ENCODE measurements at regions of chr17 and their contacts with region 1.

Region 1: GRCh38 chr17:82320956-82321927 is 3.8 kb upstream of the CD7 start:
- DNase-seq: peak in 2 of 5 donors; percentile 57 to 58
- H3K4me3 ChIP-seq: no peak overlapping the region
- H3K27ac ChIP-seq: no peak overlapping the region
- H3K4me1 ChIP-seq: peaks cover 2% of the 10 kb centered on the region
- H3K27me3 ChIP-seq: no peaks in the 10 kb centered on the region
- CTCF ChIP-seq: peak; percentile 72 to 93 (median 93)
- EP300 ChIP-seq: no peak
- POLR2A ChIP-seq: no peak

Region 2: GRCh38 chr17:81871387-81872230 is 449.6 kb before region 1 on chr17:
- intact Hi-C with region 1: no loop called
- DNase-seq: peak; percentile 93 to 96 (median 95)
- H3K4me3 ChIP-seq: peak overlapping the region; percentile 90
- H3K27ac ChIP-seq: peak overlapping the region; percentile 87 to 95
- H3K4me1 ChIP-seq: peaks cover 12% of the 10 kb centered on the region
- H3K27me3 ChIP-seq: no peaks in the 10 kb centered on the region
- CTCF ChIP-seq: peak in 2 of 3 donors; percentile 33 to 56
- EP300 ChIP-seq: peak; percentile 21
- POLR2A ChIP-seq: peak; percentile 98

Region 3: DNA sequence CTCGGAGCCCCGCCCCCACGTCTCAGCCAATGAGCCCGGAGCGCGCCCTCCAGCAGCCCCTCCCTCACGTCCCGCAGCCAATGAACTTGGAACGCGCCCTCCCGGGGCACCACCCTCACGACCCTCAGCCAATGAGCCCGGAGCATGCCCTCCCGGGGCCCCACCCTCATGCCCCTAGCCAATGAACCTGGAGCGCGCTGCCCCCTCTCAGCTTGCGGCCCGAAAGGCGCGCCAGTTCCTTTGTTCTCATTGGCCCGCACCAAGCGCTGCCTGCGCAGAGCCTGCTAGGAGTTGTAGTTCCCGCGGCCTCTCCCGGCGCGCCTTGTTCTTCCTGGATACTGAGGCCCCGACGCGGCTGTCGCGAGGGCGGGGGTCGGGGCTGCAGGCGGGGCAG is 298.3 kb before region 1 on chr17 and contains the start of gene LRRC45:
- intact Hi-C with region 1: loop called in 1 of 4 experiments (anchors 10 kb)
- DNase-seq: peak; percentile 99 to 100 (median 100)
- H3K4me3 ChIP-seq: peak within 1 kb of the TSS; percentile 95
- H3K27ac ChIP-seq: peak within 1 kb of the TSS; percentile 20 to 44
- H3K4me1 ChIP-seq: peaks cover 8% of the 10 kb centered on the region
- H3K27me3 ChIP-seq: no peaks in the 10 kb centered on the region
- CTCF ChIP-seq: no peak
- EP300 ChIP-seq: no peak
- POLR2A ChIP-seq: no peak
- total RNA-seq, gene LRRC45: 3.5 to 16.4 (median 7.1) TPM

Region 4: GRCh38 chr17:82205719-82206508 is 115.3 kb before region 1 on chr17:
- intact Hi-C with region 1: loop called (anchors 5 kb)
- DNase-seq: peak; percentile 76 to 87 (median 82)
- H3K4me3 ChIP-seq: no peak overlapping the region
- H3K27ac ChIP-seq: peak overlapping the region in 1 of 2 donors; percentile 28
- H3K4me1 ChIP-seq: peaks cover 2% of the 10 kb centered on the region
- H3K27me3 ChIP-seq: no peaks in the 10 kb centered on the region
- CTCF ChIP-seq: peak; percentile 90 to 92 (median 90)
- EP300 ChIP-seq: no peak
- POLR2A ChIP-seq: peak; percentile 13

Region 5: GRCh38 chr17:82236142-82236981 is 84.9 kb before region 1 on chr17:
- intact Hi-C with region 1: loop called (anchors 2 to 10 kb)
- DNase-seq: peak; percentile 68 to 85 (median 81)
- H3K4me3 ChIP-seq: no peak overlapping the region
- H3K27ac ChIP-seq: peak overlapping the region; percentile 1 to 60
- H3K4me1 ChIP-seq: peaks cover 54% of the 10 kb centered on the region
- H3K27me3 ChIP-seq: no peaks in the 10 kb centered on the region
- CTCF ChIP-seq: peak; percentile 85 to 91 (median 89)
- EP300 ChIP-seq: no peak
- POLR2A ChIP-seq: no peak

Region 6: DNA sequence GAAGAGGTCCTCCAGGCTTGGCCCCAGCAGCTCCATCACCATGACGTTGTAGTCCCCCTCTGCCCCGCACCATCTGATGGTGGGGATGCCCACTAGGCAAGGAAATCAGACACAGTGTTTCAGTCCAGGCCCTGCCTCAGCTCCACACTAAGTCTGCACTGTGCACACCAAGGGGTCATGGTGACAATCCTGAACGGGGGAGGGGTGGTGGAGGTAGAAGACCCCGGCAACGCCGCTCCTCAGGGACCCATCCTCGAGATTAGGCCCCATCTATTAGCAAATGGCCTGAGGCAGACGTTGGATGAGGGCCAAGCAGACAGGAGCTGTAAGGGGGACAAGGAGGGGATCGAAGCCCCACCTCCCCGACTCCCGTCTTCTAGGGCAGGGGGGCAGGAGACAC is 65.8 kb before region 1 on chr17:
- intact Hi-C with region 1: no loop called
- DNase-seq: no peak
- H3K4me3 ChIP-seq: no peak overlapping the region
- H3K27ac ChIP-seq: no peak overlapping the region
- H3K4me1 ChIP-seq: no peaks in the 10 kb centered on the region
- H3K27me3 ChIP-seq: no peaks in the 10 kb centered on the region
- CTCF ChIP-seq: no peak
- EP300 ChIP-seq: no peak
- POLR2A ChIP-seq: no peak